ENCODE measurements at regions of chr18 and their contacts with region 1.

Region 1: DNA sequence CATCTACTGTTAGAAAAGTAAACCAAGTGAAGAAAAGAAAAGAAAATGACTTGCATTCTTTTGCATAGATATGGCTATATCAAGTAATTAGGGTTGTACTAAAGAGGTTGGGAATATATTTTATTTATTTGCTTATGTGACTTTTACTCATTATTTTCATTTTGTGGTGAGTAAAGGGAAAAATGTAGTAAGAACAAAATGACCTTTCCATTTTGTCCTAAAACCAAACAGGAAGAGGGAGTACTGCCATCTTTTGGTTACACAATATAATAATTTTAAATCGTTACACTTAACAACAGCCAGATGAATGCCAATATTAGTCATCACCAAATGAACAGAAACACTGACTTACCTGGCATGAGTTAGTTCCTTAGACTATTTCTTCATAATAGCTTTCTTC is 47.3 kb upstream of the NDUFV2 start:
- DNase-seq: peak; percentile 85
- H3K4me3 ChIP-seq: peak overlapping the region in 1 of 3 experiments; percentile 25
- H3K27ac ChIP-seq: peak overlapping the region; percentile 85
- H3K4me1 ChIP-seq: peaks cover 20% of the 10 kb centered on the region
- H3K27me3 ChIP-seq: no peaks in the 10 kb centered on the region
- CTCF ChIP-seq: peak; percentile 29 to 36

Region 2: GRCh38 chr18:8654503-8655451 is 400.4 kb before region 1 on chr18:
- CTCF ChIA-PET with region 1: no interaction called
- dilution Hi-C with region 1: no loop called
- in situ Hi-C with region 1: no loop called
- intact Hi-C with region 1: loop called (anchors 2 kb)
- DNase-seq: no peak
- H3K4me3 ChIP-seq: no peak overlapping the region
- H3K27ac ChIP-seq: no peak overlapping the region
- H3K4me1 ChIP-seq: peaks cover 11% of the 10 kb centered on the region
- H3K27me3 ChIP-seq: no peaks in the 10 kb centered on the region
- CTCF ChIP-seq: peak; percentile 69 to 71

Region 3: DNA sequence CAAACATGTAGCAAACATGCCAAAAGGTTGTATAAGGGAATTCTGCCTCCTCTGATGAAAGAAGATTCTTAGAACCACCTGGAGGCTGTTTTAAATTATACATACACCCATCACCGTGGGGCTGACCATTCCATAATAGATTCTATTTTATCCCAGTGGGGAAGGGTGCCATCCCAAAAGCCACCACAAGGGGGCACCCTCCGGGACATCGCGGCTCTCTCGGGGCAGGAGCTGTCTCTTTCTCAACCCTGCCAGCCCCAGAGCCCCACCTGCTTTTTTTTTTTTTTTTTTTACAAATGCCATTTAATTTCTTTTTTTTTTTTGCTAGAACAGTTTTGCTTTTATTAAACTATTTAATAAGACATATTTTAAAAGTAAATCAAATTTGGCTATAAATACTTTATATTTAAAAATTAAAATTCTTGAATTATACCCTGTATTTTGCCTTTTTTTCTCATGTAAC is 358.4 kb before region 1 on chr18:
- CTCF ChIA-PET with region 1: no interaction called
- dilution Hi-C with region 1: no loop called
- in situ Hi-C with region 1: no loop called
- intact Hi-C with region 1: loop called (anchors 2 kb)
- DNase-seq: peak; percentile 48
- H3K4me3 ChIP-seq: no peak overlapping the region
- H3K27ac ChIP-seq: no peak overlapping the region
- H3K4me1 ChIP-seq: peaks cover 4% of the 10 kb centered on the region
- H3K27me3 ChIP-seq: no peaks in the 10 kb centered on the region
- CTCF ChIP-seq: peak; percentile 78 to 87

Region 4: DNA sequence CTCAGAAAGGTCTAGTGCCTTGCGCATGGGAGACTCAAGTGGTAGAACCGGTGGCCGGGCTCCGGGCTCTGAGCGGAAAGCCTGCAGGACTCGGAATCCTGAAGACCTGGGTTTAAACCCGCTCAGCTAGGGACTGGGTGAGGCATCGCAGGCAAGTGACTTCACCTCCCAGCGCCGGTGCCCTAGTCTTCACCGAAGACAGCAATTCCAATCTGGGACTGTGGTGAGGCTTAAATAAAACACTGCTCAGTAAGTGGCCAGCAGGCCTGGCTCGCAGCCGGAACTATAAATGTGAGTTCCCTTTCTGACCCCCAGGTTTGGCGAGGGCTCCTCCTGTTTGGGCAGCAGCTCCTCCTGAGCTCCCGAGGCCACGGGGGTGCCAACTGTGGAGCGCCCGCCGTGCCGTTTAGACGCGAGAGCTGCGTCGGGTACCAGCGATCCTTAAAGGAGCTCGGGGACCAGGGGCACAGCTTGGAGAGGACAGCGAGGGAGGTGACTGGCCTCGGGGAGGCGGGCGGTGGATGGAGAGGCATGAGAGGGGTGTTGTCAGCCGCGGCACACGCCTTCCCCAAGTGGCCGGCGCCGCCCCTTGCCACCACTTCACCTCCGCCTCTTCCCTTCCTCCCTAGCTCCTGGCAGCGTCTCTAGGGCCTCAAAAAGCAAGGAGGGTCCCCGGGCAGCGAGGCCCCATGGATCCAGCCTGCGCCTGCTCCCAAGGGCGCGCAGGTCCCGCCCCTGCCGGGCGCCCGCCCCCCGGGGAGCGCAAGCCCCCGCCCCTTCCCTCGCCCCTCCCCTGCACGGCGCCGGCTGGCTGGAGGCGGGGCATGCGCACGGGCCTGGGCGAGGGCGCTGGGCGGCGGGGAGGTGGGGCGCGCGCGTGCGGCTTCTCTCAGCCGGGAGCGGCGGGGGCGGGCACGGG is 350.6 kb before region 1 on chr18:
- CTCF ChIA-PET with region 1: no interaction called
- dilution Hi-C with region 1: no loop called
- in situ Hi-C with region 1: no loop called
- intact Hi-C with region 1: loop called (anchors 2 kb)
- DNase-seq: peak; percentile 85
- H3K4me3 ChIP-seq: peak overlapping the region; percentile 47 to 80 (median 65)
- H3K27ac ChIP-seq: peak overlapping the region; percentile 47
- H3K4me1 ChIP-seq: peaks cover 15% of the 10 kb centered on the region
- H3K27me3 ChIP-seq: no peaks in the 10 kb centered on the region
- CTCF ChIP-seq: no peak

Region 5: DNA sequence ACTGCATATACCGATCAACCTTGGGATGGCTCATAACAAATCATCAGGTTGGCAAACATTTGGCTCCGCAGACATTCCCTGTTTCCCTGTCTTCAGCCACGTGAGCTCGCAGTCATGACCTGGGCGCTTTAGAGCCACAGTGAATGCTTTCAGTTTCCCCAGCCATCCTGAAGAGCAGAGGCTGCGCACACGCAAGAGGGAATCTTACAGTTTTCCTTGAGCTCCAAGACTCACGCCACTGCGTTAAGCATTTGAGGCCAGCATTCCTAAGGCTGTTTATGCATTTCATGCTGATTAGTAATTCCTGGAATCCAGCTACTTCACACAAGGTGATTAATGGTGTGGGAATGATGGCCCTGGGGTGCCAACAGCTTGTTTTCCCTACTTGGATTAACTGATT is 254.7 kb before region 1 on chr18:
- CTCF ChIA-PET with region 1: no interaction called
- dilution Hi-C with region 1: no loop called
- in situ Hi-C with region 1: no loop called
- intact Hi-C with region 1: loop called (anchors 10 kb)
- DNase-seq: peak; percentile 78
- H3K4me3 ChIP-seq: no peak overlapping the region
- H3K27ac ChIP-seq: peak overlapping the region; percentile 51
- H3K4me1 ChIP-seq: peaks cover 39% of the 10 kb centered on the region
- H3K27me3 ChIP-seq: no peaks in the 10 kb centered on the region
- CTCF ChIP-seq: no peak

Region 6: DNA sequence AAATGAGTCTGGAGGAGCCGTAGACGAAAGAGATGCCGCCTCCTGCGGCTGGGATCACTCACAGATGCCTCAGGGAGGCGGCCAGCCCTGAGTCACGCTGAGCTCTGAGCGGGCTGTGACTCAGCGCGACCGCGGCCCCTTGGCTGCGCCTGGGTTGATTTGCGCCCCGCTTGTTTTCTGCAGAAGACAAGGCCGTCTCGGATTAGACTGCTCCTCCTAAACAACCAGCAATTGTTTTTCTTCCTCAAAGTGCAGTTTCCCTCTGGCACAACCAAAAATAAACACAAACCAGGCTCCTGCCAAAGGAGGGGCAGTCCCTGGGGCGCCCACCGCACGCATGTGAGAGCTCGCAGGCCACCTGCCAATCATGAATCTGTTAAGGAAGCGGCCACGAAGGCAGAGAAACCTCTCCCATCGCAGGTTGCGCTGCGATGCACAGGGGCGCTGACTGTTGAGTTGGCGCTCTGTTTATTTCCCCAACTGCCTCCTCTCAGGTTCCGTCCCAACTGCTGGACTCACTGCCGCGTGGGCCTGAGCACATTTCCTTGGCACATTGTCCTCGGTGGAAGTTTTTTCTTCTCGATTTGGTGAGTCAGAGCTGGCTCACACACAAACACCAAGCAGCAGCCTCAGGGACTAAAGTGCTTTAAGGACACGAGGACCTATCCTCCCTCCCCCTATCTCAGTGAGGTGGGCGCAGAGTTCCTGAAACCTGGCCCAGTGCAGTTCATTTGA is 37.8 kb before region 1 on chr18:
- CTCF ChIA-PET with region 1: no interaction called
- dilution Hi-C with region 1: no loop called
- in situ Hi-C with region 1: no loop called
- intact Hi-C with region 1: loop called (anchors 1 kb)
- DNase-seq: peak; percentile 88
- H3K4me3 ChIP-seq: peak overlapping the region in 2 of 3 experiments; percentile 8 to 34
- H3K27ac ChIP-seq: peak overlapping the region; percentile 70
- H3K4me1 ChIP-seq: peaks cover 36% of the 10 kb centered on the region
- H3K27me3 ChIP-seq: no peaks in the 10 kb centered on the region
- CTCF ChIP-seq: peak in 1 of 2 donors; percentile 9

Measured in mammary epithelial cell (primary cell).